ENCODE measurements at regions of chr5 and their contacts with region 1.

Region 1: DNA sequence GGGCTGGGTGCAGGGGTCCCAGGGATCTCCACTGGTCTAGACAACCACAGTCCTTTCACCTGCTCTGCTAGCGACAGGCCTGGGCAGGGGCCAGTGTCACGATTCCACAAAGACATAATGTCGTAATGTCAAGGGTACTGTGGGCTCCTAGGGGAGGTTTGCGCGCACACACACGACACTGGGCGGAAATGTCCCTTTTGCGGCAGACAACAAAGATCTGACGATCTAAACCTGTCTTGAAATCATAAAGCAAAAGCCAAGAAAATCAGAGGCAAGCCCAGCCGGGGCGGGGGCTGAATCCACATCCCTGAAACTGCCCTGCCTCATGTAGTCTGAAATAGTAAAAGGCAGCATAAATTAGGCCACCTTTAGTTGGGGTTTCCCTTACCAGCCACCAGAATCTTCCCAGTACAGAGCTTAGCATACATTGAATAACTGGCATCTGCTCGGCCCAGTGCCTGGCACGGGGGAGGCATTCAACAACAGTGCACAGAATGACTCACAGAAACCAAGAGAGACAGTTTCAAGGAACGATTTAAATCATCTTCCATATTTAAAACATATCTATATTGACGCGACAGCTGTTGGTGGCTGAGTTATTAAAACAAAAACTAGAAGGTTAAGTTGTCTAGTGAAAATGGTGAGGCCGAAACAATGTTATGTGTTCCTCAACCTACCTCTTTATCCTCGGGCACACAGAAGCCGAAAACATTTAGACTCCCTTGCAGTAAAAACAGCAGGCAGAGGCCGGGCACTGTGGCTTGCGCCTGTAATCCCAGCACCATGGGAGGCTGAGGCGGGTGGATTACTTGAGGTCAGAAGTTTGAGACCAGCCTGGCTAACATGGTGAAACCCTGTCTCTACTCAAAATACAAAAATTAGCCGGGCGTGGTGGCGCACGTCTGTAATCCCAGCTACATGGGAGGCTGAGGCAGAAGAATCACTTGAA is 151.0 kb downstream of the MYO10 start:
- DNase-seq: peak in 6 of 10 donors; percentile 42 to 73 (median 62)
- H3K4me3 ChIP-seq: peak overlapping the region in 6 of 59 donors; percentile 10 to 33 (median 14)
- H3K27ac ChIP-seq: peak overlapping the region in 4 of 59 donors; percentile 7 to 72 (median 47)
- H3K27me3 ChIP-seq: no peaks in the 10 kb centered on the region
- CTCF ChIP-seq: no peak

Region 2: GRCh38 chr5:16489322-16489791 is 295.8 kb before region 1 on chr5:
- intact Hi-C with region 1: loop called in 1 of 2 experiments (anchors 5 kb)
- DNase-seq: peak in 2 of 10 donors; percentile 21 to 30
- H3K4me3 ChIP-seq: no peak overlapping the region
- H3K27ac ChIP-seq: peak overlapping the region in 39 of 59 donors; percentile 0 to 77 (median 44)
- H3K27me3 ChIP-seq: no peaks in the 10 kb centered on the region
- CTCF ChIP-seq: peak; percentile 71 to 97 (median 84)

Region 3: DNA sequence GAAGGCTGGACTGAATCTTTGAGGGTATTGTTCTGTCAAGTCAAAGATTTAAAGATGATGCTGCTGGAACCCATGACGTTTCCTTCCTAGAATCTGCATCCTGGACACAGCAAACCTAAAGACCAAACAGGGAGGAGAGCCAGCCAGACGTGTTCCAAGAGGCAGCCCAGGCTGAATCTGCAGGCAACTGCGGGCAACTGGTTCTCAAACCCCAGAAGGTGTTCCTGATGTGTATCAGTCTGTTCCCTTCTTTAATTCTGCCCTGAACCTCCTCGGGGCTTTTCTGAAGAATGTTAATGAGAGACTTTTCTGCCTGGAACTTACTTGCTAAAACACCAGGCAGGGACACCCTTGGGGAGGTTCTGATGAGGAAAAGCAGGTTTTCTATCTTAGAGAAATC is 35.5 kb before region 1 on chr5:
- intact Hi-C with region 1: loop called in 1 of 2 experiments (anchors 5 kb)
- DNase-seq: no peak
- H3K4me3 ChIP-seq: no peak overlapping the region
- H3K27ac ChIP-seq: no peak overlapping the region
- H3K27me3 ChIP-seq: no peaks in the 10 kb centered on the region
- CTCF ChIP-seq: no peak

Region 4: GRCh38 chr5:16916262-16916865 is 131.2 kb after region 1 on chr5:
- intact Hi-C with region 1: no loop called
- DNase-seq: no peak
- H3K4me3 ChIP-seq: no peak overlapping the region
- H3K27ac ChIP-seq: no peak overlapping the region
- H3K27me3 ChIP-seq: no peaks in the 10 kb centered on the region
- CTCF ChIP-seq: no peak

Measured in dorsolateral prefrontal cortex (tissue), 120 donors.